A673 (cell line): ENCODE measurements at regions of chr7 and their contacts with region 1.

Region 1: GRCh38 chr7:137656227-137656849 is 190.4 kb downstream of the DGKI start:
- DNase-seq: peak; percentile 78
- H3K4me3 ChIP-seq: no peak overlapping the region
- H3K27ac ChIP-seq: no peak overlapping the region
- H3K4me1 ChIP-seq: no peaks in the 10 kb centered on the region
- H3K27me3 ChIP-seq: no peaks in the 10 kb centered on the region
- CTCF ChIP-seq: peak; percentile 87

Region 2: DNA sequence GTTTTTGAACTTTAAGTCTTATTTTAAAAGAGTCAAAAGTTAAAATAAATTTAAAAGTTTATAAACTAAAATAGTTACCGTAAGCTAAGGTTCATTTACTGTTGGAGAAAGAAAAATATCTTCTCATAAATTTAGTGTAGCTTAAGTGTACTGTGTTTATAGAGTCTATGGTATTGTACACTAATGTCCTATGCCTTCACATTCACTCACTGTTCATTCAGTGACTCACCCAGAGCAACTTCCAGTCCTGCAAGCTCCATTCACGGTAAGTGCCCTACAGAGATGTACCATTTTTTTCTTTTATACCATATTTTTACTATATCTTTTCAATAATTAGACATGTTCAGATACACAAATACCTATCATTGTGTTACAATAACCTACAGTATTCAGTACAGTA is 410.4 kb before region 1 on chr7:
- CTCF ChIA-PET with region 1: no interaction called
- POLR2A ChIA-PET with region 1: no interaction called
- intact Hi-C with region 1: no loop called
- DNase-seq: no peak
- H3K4me3 ChIP-seq: no peak overlapping the region
- H3K27ac ChIP-seq: no peak overlapping the region
- H3K4me1 ChIP-seq: no peaks in the 10 kb centered on the region
- H3K27me3 ChIP-seq: no peaks in the 10 kb centered on the region
- CTCF ChIP-seq: no peak

Region 3: DNA sequence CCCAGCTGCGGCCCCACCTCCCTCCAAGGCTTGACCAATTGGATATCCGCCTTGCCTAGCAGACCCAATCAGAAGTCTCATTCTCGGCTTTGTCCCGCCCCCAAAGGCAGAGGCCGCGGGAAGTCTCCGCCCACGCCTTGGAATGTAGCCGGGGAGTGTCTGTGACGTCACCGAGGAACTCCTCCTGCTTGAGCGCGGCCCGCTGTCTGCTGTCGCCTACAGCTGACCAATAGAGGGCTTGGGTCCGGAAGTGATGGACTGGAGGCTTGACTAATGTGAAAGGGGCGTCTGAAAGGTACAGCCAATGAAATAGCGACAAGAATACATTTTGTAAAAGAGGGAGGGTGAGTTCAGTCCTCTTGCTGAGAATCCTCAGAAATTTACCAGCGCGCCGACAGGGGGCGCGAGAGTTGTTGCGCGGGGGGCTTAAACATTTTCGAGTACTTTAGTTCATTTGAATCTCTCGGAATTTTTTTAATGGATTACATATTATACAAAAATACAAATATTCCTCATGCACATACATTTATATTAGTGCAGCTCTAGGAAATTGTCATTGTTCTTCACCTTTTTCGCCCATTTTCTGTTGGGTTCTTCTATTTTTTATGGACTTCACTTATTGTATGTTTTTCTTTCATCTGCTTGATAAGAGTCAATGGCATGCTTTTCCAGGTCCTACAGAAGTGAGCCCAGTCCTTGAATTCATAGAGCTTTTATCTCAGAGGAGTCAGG is 345.9 kb after region 1 on chr7:
- CTCF ChIA-PET with region 1: no interaction called
- POLR2A ChIA-PET with region 1: no interaction called
- intact Hi-C with region 1: loop called (anchors 5 kb)
- DNase-seq: peak; percentile 99
- H3K4me3 ChIP-seq: peak overlapping the region; percentile 72
- H3K27ac ChIP-seq: peak overlapping the region; percentile 47
- H3K4me1 ChIP-seq: peaks cover 11% of the 10 kb centered on the region
- H3K27me3 ChIP-seq: no peaks in the 10 kb centered on the region
- CTCF ChIP-seq: peak; percentile 97